GM23248 (cell line): ENCODE measurements at regions of chr2 and their contacts with region 1.

Region 1: DNA sequence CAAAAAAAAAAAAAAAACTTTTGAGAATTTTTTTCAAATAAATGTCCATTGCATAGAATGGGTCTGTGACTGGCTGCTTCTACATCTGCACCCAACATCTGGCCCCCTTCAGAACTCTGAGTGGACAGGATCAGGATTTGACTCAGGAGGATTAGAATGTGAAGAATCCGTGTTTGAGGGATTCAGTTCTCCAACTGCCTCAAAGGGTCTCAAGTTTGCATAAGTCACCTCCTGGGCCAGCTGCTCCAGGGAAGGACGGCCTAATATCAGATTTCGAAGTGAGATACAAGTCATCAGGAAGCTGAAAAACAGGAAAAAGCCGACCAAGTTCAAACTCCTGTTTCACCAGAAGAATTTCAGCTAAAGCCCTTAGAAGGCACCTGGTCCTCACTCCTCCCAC is 10.9 kb downstream of the MAT2A start:
- DNase-seq: peak; percentile 88
- H3K4me3 ChIP-seq: no peak overlapping the region
- H3K27ac ChIP-seq: peak overlapping the region; percentile 65
- H3K4me1 ChIP-seq: peaks cover 24% of the 10 kb centered on the region
- H3K27me3 ChIP-seq: no peaks in the 10 kb centered on the region

Region 2: GRCh38 chr2:85420536-85421259 is 129.1 kb before region 1 on chr2:
- in situ Hi-C with region 1: loop called (anchors 5 kb)
- DNase-seq: peak; percentile 76
- H3K4me3 ChIP-seq: peak overlapping the region; percentile 36
- H3K27ac ChIP-seq: peak overlapping the region; percentile 22
- H3K4me1 ChIP-seq: peaks cover 20% of the 10 kb centered on the region
- H3K27me3 ChIP-seq: no peaks in the 10 kb centered on the region